ENCODE measurements at regions of chr7 and their contacts with region 1.

Region 1: GRCh38 chr7:124764847-124765400 is 668 bp downstream of the GPR37 start:
- DNase-seq: no peak
- ATAC-seq: peak; percentile 62
- H3K4me3 ChIP-seq: peak overlapping the region; percentile 51 to 56
- H3K27ac ChIP-seq: no peak overlapping the region
- H3K4me1 ChIP-seq: no peaks in the 10 kb centered on the region; the same call in 1 of the 2 replicates
- H3K27me3 ChIP-seq: peaks cover 19% of the 10 kb centered on the region
- CTCF ChIP-seq: no peak

Region 2: GRCh38 chr7:123811056-123811455 is 953.9 kb before region 1 on chr7:
- CTCF ChIA-PET with region 1: no interaction called
- POLR2A ChIA-PET with region 1: interaction called, 14 read pairs
- in situ Hi-C with region 1: no loop called
- intact Hi-C with region 1: no loop called
- DNase-seq: no peak
- ATAC-seq: no peak
- H3K4me3 ChIP-seq: no peak overlapping the region
- H3K27ac ChIP-seq: no peak overlapping the region
- H3K4me1 ChIP-seq: no peaks in the 10 kb centered on the region
- H3K27me3 ChIP-seq: no peaks in the 10 kb centered on the region
- CTCF ChIP-seq: no peak

Region 3: DNA sequence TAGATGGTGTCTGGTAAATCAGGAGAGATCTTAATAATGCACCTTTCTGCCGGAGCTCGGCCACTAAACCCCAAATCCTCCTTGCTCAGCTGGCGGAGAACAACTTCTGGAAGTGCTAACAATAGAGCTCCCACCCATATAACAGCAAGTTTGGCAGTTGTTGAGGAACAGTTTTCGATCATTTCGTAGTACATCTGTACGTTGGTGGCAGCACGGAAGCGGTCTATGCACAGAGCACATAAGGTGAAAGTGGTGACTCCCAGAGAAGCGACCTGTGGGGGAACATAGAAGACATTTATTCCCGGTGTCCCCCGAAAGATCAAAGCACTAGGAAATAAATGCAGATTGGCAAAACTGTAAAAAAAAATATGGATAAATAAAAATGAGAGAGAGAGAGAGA is 17.9 kb before region 1 on chr7:
- CTCF ChIA-PET with region 1: no interaction called
- POLR2A ChIA-PET with region 1: no interaction called
- in situ Hi-C with region 1: no loop called
- intact Hi-C with region 1: loop called (anchors 1 kb)
- DNase-seq: no peak
- ATAC-seq: no peak
- H3K4me3 ChIP-seq: no peak overlapping the region
- H3K27ac ChIP-seq: no peak overlapping the region
- H3K4me1 ChIP-seq: no peaks in the 10 kb centered on the region
- H3K27me3 ChIP-seq: no peaks in the 10 kb centered on the region
- CTCF ChIP-seq: no peak